H1 (cell line): ENCODE measurements at regions of chr19 and their contacts with region 1.

Region 1: DNA sequence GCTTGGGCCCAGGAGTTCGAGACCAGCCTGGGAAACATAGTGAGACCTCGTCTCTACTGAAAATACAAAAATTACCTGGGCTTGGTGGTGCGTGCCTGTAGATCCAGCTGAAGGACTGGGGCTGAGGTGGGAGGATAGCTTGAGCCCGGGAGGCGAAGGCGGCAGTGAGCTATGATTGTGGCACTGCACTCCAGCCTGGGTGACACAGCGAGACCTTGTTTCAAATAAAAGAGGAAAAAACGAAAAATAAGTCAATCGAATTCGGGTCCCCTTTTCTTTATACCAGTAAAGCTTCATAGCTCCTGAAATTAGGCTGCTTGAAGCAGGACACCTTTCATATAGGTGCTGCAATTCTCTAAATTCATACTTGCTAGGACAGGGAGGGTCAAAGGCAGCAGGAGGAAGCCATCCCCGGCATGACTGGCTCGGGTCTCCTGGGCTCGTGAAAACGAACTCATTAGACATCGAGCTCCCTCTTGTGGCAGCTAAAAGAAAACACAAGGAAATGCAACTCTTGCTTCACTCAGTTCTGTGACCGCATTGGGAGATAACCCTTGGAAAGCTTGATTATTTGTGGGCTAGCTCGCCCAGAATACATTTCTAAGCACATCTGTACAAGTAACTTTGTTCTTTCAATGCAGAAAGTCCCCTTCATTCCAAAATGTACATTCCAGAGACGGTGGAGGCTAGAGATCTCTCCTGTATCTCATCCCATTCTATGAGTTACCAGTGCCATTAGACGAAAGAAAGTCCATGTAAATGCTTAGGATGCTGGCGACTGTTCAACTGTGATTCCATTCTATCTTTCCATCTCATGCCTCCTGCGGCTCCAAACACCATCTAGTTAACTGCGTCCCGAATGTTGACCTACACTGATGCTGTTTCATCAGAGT is 16.8 kb downstream of the FPR2 start:
- DNase-seq: peak; percentile 50 to 51
- H3K4me3 ChIP-seq: no peak overlapping the region
- H3K27ac ChIP-seq: no peak overlapping the region
- H3K4me1 ChIP-seq: no peaks in the 10 kb centered on the region
- H3K27me3 ChIP-seq: no peaks in the 10 kb centered on the region; a peak in 1 of 7 replicates
- CTCF ChIP-seq: peak; percentile 47 to 83 (median 81)
- EP300 ChIP-seq: no peak
- POLR2A ChIP-seq: no peak
- RAD21 ChIP-seq: peak; percentile 91 to 93

Region 2: DNA sequence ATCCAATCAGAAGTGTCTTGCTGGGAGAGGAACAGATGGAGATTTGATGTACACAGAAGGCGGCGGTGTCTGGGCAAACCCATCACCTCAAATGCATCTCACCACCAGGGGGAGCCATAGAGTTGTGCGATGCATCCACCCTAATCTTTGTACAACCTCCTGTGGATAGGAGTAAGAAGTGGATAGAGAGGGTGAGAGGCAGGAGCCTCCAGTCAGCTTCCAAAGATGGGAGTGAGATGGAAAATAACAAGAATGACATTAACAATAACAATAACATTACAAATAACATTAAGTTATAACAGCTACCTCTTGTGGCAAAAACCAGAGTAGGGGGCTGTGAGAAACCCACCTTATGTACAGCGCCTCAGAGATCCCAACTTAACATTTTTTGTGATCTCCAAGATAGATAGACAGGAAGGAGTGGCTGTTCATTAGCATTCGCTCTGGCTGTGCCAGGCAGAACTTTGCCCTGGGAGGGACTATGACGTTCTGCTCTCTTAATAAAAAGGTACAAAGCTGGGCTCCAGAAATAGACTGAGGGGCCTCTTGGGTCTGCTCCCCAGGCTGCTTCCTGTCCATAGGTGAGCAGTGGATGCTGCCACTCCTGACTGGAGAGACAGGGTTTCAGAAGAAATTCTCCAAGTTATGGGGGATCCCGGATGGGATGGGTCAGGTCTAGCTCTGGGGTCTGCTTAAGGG is 304.7 kb before region 1 on chr19:
- CTCF ChIA-PET with region 1: interaction called, 13 read pairs
- POLR2A ChIA-PET with region 1: no interaction called
- DNase-seq: peak; percentile 17 to 86
- H3K4me3 ChIP-seq: no peak overlapping the region
- H3K27ac ChIP-seq: no peak overlapping the region
- H3K4me1 ChIP-seq: no peaks in the 10 kb centered on the region
- H3K27me3 ChIP-seq: no peaks in the 10 kb centered on the region; a peak in 1 of 7 replicates
- CTCF ChIP-seq: peak; percentile 76 to 81 (median 78)
- EP300 ChIP-seq: no peak
- POLR2A ChIP-seq: no peak
- RAD21 ChIP-seq: peak; percentile 78

Region 3: GRCh38 chr19:51644636-51645271 is 133.1 kb before region 1 on chr19:
- CTCF ChIA-PET with region 1: no interaction called
- POLR2A ChIA-PET with region 1: no interaction called
- DNase-seq: no peak
- H3K4me3 ChIP-seq: no peak overlapping the region
- H3K27ac ChIP-seq: no peak overlapping the region
- H3K4me1 ChIP-seq: no peaks in the 10 kb centered on the region
- H3K27me3 ChIP-seq: no peaks in the 10 kb centered on the region
- CTCF ChIP-seq: no peak
- EP300 ChIP-seq: no peak
- POLR2A ChIP-seq: no peak
- RAD21 ChIP-seq: no peak

Region 4: GRCh38 chr19:51660975-51661600 is 116.7 kb before region 1 on chr19:
- CTCF ChIA-PET with region 1: interaction called, 12 read pairs
- POLR2A ChIA-PET with region 1: no interaction called
- DNase-seq: peak in 1 of 2 experiments; percentile 75
- H3K4me3 ChIP-seq: no peak overlapping the region
- H3K27ac ChIP-seq: no peak overlapping the region
- H3K4me1 ChIP-seq: no peaks in the 10 kb centered on the region
- H3K27me3 ChIP-seq: peaks cover 0 to 2% (median 0%) of the 10 kb centered on the region in 4 experiments; a peak in 1 of 7 replicates
- CTCF ChIP-seq: peak; percentile 60 to 77 (median 64)
- EP300 ChIP-seq: no peak
- POLR2A ChIP-seq: no peak
- RAD21 ChIP-seq: peak; percentile 73 to 83

Region 5: GRCh38 chr19:51681321-51682168 is 96.3 kb before region 1 on chr19:
- CTCF ChIA-PET with region 1: interaction called, 16 read pairs
- POLR2A ChIA-PET with region 1: interaction called, 3 read pairs
- DNase-seq: no peak
- H3K4me3 ChIP-seq: no peak overlapping the region
- H3K27ac ChIP-seq: no peak overlapping the region
- H3K4me1 ChIP-seq: no peaks in the 10 kb centered on the region
- H3K27me3 ChIP-seq: 0 out of 7 replicates have a peak, but pooled peaks cover 0 to 4% (median 0%) of the 10 kb centered on the region in 4 experiments
- CTCF ChIP-seq: no peak
- EP300 ChIP-seq: no peak
- POLR2A ChIP-seq: no peak
- RAD21 ChIP-seq: no peak

Region 6: GRCh38 chr19:51712460-51713083 is 65.2 kb before region 1 on chr19:
- CTCF ChIA-PET with region 1: interaction called, 14 read pairs
- POLR2A ChIA-PET with region 1: no interaction called
- DNase-seq: peak; percentile 51 to 57
- H3K4me3 ChIP-seq: no peak overlapping the region
- H3K27ac ChIP-seq: no peak overlapping the region
- H3K4me1 ChIP-seq: 0 out of 7 replicates have a peak, but pooled peaks cover 0 to 2% (median 0%) of the 10 kb centered on the region in 4 experiments
- H3K27me3 ChIP-seq: peaks cover 0 to 3% (median 0%) of the 10 kb centered on the region in 4 experiments; a peak in 4 of 7 replicates
- CTCF ChIP-seq: peak; percentile 73 to 80 (median 79)
- EP300 ChIP-seq: no peak
- POLR2A ChIP-seq: no peak
- RAD21 ChIP-seq: peak; percentile 65 to 73

Region 7: GRCh38 chr19:51737924-51738323 is 39.9 kb before region 1 on chr19:
- CTCF ChIA-PET with region 1: interaction called, 17 read pairs
- POLR2A ChIA-PET with region 1: no interaction called
- DNase-seq: no peak
- H3K4me3 ChIP-seq: no peak overlapping the region
- H3K27ac ChIP-seq: no peak overlapping the region
- H3K4me1 ChIP-seq: peaks cover 0 to 3% (median 0%) of the 10 kb centered on the region in 4 experiments; a peak in 2 of 7 replicates
- H3K27me3 ChIP-seq: no peaks in the 10 kb centered on the region
- CTCF ChIP-seq: no peak
- EP300 ChIP-seq: no peak
- POLR2A ChIP-seq: no peak
- RAD21 ChIP-seq: no peak

Region 8: DNA sequence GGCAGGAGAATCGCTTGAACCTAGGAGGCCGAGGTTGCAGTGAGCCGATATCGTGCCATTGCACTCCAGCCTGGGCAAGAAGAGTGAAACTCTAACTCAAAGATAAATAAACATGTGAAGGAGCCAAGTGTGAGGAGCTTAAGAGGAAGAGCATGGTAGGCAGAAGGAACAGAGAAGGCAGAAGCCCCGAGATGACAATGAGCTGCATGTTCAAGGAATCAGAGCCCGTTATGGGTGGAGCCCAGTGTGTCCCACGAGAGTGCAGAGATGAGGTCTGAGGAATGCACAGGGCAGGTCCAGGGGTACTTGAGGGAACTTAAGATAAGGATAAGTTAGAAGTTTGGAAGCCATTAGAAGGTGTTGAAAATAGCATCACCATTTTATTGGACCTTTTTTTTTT is 16.1 kb before region 1 on chr19:
- CTCF ChIA-PET with region 1: interaction called, 14 read pairs
- POLR2A ChIA-PET with region 1: no interaction called
- DNase-seq: no peak
- H3K4me3 ChIP-seq: no peak overlapping the region
- H3K27ac ChIP-seq: no peak overlapping the region
- H3K4me1 ChIP-seq: peaks cover 0 to 3% (median 1%) of the 10 kb centered on the region in 4 experiments; a peak in 1 of 7 replicates
- H3K27me3 ChIP-seq: no peaks in the 10 kb centered on the region
- CTCF ChIP-seq: no peak
- EP300 ChIP-seq: no peak
- POLR2A ChIP-seq: no peak
- RAD21 ChIP-seq: no peak

Region 9: DNA sequence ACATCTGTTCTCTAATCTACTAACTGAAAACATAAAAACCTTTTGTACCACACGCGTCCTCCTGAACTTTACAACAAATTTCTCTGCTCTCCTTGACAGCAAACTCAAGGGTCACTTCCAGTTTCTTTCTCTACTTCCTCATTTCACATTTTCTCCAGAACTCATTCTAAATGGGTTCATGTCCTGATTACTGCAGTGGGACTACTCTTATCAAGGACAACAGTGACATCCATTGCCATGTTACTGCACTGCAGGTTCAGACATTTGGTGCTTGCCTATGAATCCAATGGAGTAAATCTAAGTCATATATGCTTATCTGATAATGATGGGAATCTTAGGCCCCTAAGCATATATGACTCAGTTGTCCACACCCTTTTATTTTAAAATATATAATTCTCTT is 52.5 kb after region 1 on chr19:
- CTCF ChIA-PET with region 1: no interaction called
- POLR2A ChIA-PET with region 1: no interaction called
- DNase-seq: no peak
- H3K4me3 ChIP-seq: no peak overlapping the region
- H3K27ac ChIP-seq: no peak overlapping the region
- H3K4me1 ChIP-seq: no peaks in the 10 kb centered on the region
- H3K27me3 ChIP-seq: no peaks in the 10 kb centered on the region
- CTCF ChIP-seq: no peak
- EP300 ChIP-seq: no peak
- POLR2A ChIP-seq: no peak
- RAD21 ChIP-seq: no peak; a peak in 1 of 4 replicates